ENCODE measurements at regions of chrX and their contacts with region 1.

Region 1: DNA sequence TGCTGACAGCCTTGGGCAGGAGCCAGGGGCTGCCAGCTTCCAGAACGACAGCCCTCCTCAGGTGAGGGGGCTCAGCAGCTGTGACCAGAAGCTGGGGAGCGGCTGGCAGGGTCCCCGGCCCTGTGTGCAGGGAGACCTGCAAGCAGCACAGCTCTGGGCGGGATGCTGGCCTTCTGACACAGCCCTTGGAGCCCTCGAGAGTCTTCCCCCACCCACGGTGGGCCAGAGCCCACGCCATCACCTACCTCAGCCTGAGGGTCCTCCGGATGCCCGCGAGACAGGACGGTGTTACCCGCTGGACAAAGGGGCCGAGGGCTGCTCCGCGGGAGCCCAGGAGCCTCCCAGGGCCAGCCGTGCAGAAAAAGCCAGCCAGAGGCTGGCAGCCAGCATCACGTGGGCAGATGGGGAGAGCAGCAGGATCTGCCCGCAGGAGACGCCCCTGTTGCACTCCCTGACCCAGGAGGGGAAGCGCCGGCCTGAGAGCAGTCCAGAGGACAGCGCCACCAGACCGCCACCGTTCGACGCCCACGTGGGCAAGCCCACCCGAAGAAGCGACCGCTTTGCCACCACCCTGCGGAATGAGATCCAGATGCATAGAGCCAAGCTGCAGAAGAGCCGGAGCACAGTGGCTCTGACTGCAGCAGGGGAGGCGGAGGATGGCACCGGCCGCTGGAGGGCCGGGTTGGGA is 71.8 kb upstream of the CLDN34 start:
- DNase-seq: no peak

Region 2: DNA sequence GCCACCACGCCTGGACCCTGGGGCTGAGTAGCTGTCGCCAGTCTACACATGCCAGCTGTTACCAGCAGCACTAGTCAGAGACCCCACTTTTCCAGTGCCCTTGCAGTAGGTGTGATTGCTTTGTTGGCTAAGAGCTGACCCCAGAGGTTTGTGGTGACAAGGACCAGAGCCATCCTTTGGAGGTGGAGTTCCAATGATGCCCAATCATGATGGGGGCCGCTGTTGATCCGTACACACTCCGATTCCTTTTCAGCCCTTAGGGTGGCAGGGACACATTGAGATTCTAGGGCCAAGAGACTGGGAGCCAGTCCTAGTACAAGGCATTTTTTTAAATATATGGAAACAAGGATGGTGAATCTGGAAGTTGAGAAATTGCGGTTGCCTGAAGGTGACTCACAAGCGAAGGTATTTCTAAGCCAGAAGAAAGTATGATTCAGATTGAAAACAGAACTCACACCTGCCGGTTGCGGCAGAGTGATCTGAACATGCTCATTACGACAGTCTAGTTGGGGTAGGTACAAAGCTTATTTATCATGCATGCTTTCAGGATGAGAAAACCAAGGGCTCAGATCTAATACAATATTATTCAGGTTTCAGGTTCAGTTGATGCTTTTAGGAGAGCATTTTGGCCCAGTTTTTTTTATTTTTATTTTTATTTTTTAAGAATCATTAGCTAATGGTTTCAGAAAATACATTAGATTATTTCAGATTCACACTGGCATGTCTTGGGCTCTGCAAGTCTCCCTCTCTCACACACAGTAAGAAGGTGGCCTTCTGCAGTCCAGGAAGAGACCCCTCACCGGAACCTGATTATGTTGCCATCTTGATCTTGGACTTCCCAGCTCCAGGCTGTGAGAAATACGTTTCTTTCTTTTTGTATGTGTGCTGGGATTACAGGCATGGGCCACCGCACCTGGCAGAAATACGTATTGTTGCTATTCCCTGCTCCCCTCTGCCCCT is 65.8 kb before region 1 on chrX:
- intact Hi-C with region 1: loop called in 1 of 2 experiments (anchors 2 kb)
- DNase-seq: no peak

Measured in posterior vena cava (tissue), 2 donors.